ENCODE measurements at regions of chrX and their contacts with region 1.

Region 1: DNA sequence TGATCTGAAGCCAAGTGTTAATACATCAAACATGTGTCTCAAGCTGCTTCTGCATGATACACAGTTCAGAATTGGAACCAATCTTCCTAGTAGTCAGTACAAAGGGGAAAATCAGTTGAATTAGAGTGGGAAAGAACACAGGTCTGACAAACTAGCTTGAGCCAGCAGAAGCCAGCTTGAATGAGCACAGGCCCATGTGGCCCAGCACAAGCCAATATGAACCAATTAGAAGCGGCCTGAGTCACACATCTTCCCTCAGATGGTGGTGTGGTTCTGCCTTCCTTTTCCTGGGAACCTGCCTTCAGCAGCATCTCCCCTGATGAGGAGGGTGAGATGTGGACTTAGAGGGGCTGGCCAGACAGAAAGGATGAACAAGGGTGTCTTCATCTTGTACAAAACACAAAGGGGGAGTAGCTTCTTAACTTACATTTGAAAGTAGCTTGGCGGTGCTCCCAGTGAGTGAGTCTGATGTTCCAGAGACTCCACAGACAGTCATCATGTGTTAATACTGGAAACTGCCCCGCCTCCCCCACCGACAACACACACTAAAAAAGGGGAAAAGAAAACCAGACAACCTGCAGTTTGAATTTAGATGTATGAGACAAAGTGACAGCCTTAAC is 72.0 kb downstream of the FRMPD4 start:
- DNase-seq: peak; percentile 87
- H3K4me3 ChIP-seq: no peak overlapping the region
- H3K27ac ChIP-seq: peak overlapping the region in 3 of 4 donors; percentile 57 to 78 (median 63)
- H3K4me1 ChIP-seq: peaks cover 0 to 16% (median 0%) of the 10 kb centered on the region in 4 donors
- H3K27me3 ChIP-seq: no peaks in the 10 kb centered on the region
- CTCF ChIP-seq: no peak
- EP300 ChIP-seq: no peak
- POLR2A ChIP-seq: no peak

Region 2: DNA sequence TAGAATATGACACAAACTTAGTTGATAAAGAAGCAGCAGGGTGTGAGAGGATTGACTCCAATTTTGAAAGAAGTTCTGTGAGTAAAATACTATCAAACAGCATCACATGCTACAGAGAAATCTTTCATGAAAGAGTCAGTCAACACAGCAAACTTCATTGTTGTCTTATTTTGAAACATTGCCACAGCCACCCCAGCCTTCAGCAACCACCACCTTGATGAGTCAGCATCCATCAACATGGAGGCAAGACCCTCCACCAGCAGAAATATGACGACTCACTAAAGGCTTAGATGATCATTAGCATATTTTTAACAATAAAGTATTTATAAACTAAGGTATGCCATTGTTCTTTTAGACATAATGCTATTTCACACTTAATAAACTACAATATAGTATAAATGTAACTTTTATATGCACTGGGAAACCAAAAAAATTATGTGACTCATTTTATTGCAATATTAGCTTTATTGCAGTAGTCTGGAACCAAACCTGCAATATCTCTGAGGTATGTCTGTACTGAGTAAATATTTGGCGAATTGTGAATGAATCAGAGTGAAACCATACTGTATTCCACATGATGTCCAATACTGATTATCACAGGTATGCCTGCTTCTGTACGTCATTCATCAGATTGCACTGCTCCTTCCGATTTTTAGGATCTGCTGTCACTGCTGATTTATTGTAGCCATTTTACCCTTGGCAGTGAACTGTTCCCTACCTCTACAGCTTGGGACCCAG is 60.5 kb before region 1 on chrX:
- intact Hi-C with region 1: loop called (anchors 5 kb)
- DNase-seq: no peak
- H3K4me3 ChIP-seq: no peak overlapping the region
- H3K27ac ChIP-seq: no peak overlapping the region
- H3K4me1 ChIP-seq: peaks cover 0 to 4% (median 0%) of the 10 kb centered on the region in 4 donors
- H3K27me3 ChIP-seq: no peaks in the 10 kb centered on the region
- CTCF ChIP-seq: no peak
- EP300 ChIP-seq: no peak
- POLR2A ChIP-seq: no peak

Region 3: DNA sequence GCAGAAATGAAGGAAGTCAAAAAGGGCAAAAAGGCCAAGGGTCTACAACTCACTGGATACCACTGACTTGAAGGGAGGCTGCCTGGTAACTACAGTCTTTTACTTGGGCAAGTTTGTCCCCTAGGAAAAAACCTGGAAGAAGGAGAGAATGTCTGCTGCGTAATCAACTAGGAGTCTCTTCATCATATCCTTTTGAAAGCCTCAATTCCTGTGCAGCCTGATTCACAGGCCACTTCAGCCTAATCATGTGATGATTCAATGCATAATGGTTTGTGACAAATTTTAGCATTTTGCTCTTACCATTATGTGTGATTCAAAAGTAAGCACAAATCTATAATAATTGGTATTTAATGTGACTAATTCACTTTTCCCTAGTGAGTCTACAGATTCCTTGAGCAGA is 201.5 kb after region 1 on chrX:
- intact Hi-C with region 1: no loop called
- DNase-seq: no peak
- H3K4me3 ChIP-seq: no peak overlapping the region
- H3K27ac ChIP-seq: no peak overlapping the region
- H3K4me1 ChIP-seq: no peaks in the 10 kb centered on the region
- H3K27me3 ChIP-seq: no peaks in the 10 kb centered on the region
- CTCF ChIP-seq: no peak
- EP300 ChIP-seq: no peak
- POLR2A ChIP-seq: no peak